Panc1 (cell line): ENCODE measurements at regions of chr18 and their contacts with region 1.

Region 1: DNA sequence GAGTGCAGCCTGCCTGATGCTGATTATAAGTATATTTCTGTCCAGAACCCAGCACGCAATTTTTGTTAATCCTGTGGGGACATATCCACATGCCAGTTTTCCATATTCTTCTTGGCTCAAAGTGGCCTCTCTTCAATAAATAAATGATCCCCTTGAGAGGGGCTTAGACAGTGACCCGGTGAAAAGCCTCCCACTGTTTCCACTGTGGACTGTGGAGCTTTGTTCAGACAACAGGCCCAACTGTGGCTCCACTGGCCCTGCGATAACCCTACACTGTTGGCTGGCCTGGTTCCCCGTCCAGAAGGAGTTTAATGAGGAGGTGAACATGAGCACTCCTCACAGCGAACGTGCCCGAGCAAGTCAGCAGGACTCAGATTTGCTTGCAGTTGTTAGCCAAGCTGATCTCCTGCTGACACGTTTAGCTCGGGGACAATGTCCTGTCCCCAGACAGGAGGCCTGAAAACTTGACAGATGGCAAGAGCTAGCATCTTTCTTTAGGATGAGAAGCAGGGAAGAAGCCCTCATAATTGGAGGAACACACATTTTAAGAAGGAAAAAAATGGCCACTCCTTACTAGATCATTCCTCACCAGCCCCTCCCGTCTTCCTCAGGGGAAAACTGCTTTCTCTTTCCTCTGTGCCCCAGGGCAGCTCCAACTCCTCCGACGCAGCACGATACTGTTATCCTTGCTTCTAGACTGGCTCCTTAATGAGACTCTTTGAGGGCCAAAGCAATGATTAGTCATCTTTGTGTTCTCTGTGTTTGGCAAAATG is 20.0 kb upstream of the MTCL1 start:
- DNase-seq: no peak
- ATAC-seq: no peak; the same call in 1 of the 2 replicates
- H3K4me3 ChIP-seq: no peak overlapping the region
- H3K27ac ChIP-seq: no peak overlapping the region
- H3K4me1 ChIP-seq: no peaks in the 10 kb centered on the region
- H3K27me3 ChIP-seq: no peaks in the 10 kb centered on the region
- CTCF ChIP-seq: no peak

Region 2: DNA sequence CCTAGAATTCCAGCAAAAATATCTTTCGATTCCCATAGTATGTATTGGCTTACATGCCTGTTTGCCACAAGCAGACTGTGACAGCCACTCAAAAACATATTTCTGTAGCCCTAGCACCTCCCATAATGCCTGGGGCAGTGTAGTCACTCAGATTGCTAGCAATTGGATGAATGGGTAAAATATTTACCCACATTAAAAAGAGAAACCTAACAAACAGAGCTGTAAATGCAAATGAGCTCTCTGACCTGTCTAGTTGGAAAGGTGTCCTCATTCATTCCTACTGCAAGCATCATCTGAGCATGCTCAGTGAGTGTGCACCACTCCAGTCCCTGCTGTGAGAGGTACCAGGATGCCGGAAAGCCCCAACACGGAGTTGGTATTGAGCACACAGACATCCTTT is 310.1 kb before region 1 on chr18:
- CTCF ChIA-PET with region 1: no interaction called
- POLR2A ChIA-PET with region 1: no interaction called
- in situ Hi-C with region 1: no loop called
- intact Hi-C with region 1: no loop called
- DNase-seq: no peak
- ATAC-seq: no peak
- H3K4me3 ChIP-seq: no peak overlapping the region
- H3K27ac ChIP-seq: no peak overlapping the region
- H3K4me1 ChIP-seq: no peaks in the 10 kb centered on the region
- H3K27me3 ChIP-seq: peaks cover 5% of the 10 kb centered on the region
- CTCF ChIP-seq: no peak

Region 3: GRCh38 chr18:8584798-8585197 is 100.5 kb before region 1 on chr18:
- CTCF ChIA-PET with region 1: no interaction called
- POLR2A ChIA-PET with region 1: no interaction called
- in situ Hi-C with region 1: no loop called
- intact Hi-C with region 1: no loop called
- DNase-seq: no peak
- ATAC-seq: no peak
- H3K4me3 ChIP-seq: no peak overlapping the region
- H3K27ac ChIP-seq: no peak overlapping the region
- H3K4me1 ChIP-seq: peaks cover 2% of the 10 kb centered on the region; the same call in 1 of the 2 replicates
- H3K27me3 ChIP-seq: no peaks in the 10 kb centered on the region
- CTCF ChIP-seq: no peak

Region 4: GRCh38 chr18:8704361-8705279 is 19.3 kb after region 1 on chr18:
- CTCF ChIA-PET with region 1: no interaction called
- POLR2A ChIA-PET with region 1: interaction called, 11 read pairs
- in situ Hi-C with region 1: no loop called
- intact Hi-C with region 1: no loop called
- DNase-seq: no peak
- ATAC-seq: peak; percentile 81
- H3K4me3 ChIP-seq: peak overlapping the region; percentile 59 to 66
- H3K27ac ChIP-seq: peak overlapping the region; percentile 85
- H3K4me1 ChIP-seq: peaks cover 22% of the 10 kb centered on the region
- H3K27me3 ChIP-seq: no peaks in the 10 kb centered on the region
- CTCF ChIP-seq: no peak